ENCODE measurements at regions of chr20 and their contacts with region 1.

Region 1: DNA sequence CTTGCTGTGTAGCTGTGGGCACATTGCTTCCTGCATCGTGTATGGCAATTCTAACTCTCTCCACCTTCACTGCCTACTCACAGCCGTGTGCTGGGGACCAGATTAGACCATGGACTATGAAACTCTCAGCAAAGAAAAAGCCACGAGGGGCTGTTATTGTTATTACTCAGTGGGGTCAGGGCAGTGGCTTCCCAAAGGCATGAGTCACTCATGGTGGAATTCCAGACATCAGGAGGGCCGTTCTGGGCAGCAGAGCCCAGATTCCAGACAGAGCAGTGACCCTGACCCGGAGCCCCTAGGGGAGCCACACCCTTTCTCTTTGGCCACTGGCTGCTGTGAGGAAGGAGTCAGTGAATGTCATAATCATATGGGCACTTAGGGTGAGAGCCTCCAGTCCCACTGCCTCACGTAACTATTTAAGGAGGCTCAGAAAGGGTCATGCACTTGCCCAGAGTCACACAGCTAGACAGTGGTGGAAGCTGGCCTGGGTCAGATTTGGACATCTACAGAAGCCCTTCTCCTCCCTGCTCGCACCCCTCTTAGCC is 22.2 kb upstream of the CCN5 start:
- DNase-seq: peak; percentile 71 to 73
- ATAC-seq: peak; percentile 67 to 90 (median 76)
- H3K4me3 ChIP-seq: no peak overlapping the region
- H3K27ac ChIP-seq: peak overlapping the region; percentile 26 to 88 (median 76)
- H3K4me1 ChIP-seq: peaks cover 15 to 61% (median 42%) of the 10 kb centered on the region in 9 donors
- H3K27me3 ChIP-seq: no peaks in the 10 kb centered on the region
- CTCF ChIP-seq: no peak

Region 2: DNA sequence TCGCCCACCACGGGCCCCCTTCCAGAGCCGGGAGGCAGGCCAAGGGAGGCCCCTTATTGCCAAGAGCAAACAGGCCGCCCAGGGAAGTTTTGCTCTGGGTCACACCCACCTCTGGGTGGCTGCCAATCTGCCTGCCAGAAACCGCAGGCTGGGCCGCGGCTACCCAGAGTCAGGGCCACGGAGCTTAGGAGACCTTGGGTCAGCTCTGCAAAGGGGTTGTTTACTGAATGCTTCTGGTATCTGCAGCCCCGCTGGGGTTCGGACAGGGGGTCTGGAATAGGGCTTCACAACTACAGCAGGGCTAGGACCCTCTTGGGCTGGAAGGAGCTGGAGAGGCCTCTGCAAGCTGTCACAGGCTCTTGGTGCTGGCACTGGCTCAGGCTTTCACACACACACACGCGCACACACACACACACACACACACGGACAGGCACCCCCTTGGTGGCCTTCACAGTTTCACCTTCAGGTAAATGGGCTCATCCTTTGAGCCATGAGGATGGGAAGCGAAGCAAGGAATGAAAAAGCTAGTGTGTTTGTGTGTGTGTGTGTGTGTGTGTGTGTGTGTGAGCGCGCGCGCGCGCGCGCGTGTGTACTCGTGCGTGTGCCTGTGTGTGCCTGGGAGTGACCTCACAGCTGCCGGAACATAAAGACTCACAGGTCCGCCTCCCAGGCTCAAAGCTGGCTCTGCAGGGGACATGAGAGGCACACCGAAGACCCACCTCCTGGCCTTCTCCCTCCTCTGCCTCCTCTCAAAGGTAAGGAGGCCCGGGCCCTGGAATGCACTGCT is 21.9 kb after region 1 on chr20 and contains the start of gene CCN5:
- intact Hi-C with region 1: loop called in 2 of 10 experiments (anchors 1 to 2 kb)
- DNase-seq: peak; percentile 87 to 93
- ATAC-seq: peak; percentile 77 to 93 (median 87)
- H3K4me3 ChIP-seq: peak within 1 kb of the TSS in 8 of 10 donors; percentile 2 to 31 (median 14)
- H3K27ac ChIP-seq: peak within 1 kb of the TSS; percentile 71 to 87 (median 82)
- H3K4me1 ChIP-seq: peaks cover 18 to 48% (median 44%) of the 10 kb centered on the region in 9 donors
- H3K27me3 ChIP-seq: no peaks in the 10 kb centered on the region
- CTCF ChIP-seq: no peak
- total RNA-seq, gene CCN5: 4.3 to 47.6 (median 14.4) TPM